ENCODE measurements at regions of chr18 and their contacts with region 1.

Region 1: DNA sequence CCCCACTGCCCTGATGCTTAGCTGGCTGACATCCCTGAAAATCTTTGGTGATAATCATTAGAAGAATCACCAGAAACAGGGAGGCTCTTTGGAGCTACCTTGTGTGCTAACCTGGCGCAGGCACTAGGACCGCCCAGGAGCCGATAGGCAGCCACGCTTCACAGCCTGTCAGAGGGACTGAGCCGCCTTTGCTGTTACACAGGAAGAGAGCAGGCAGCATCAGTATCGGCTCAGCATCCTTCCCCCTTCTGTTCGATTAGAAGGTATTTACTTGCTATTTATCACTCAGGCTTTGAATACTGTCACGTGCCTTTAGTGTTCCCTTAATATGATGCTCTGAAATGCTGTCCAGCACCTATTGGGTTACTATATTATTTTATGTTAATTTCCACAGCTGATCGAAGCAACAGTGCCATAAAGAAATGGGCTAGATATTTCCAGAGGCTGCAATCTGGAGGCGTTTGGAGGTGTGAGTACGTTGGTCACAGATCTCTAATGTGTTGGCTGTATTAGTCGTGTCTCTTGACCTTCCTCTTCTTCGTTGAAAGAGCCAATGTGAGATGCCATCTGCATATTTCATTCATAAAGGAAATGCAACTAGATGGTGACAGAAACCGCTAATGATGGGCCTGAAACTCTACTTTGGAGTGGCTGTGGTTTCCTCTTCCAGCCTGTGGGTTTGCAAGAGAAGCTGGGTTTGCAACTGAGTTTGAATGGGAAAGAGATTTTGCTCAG is 110.4 kb upstream of the RAB27B start:
- DNase-seq: peak; percentile 74
- ATAC-seq: peak; percentile 91
- H3K4me3 Mint-ChIP-seq: peak overlapping the region; percentile 53
- H3K27ac Mint-ChIP-seq: peak overlapping the region; percentile 44
- H3K4me1 Mint-ChIP-seq: peaks cover 39% of the 10 kb centered on the region
- H3K27me3 Mint-ChIP-seq: peaks cover 6% of the 10 kb centered on the region

Region 2: GRCh38 chr18:54269893-54270844 is 447.7 kb before region 1 on chr18:
- CTCF ChIA-PET with region 1: no interaction called
- POLR2A ChIA-PET with region 1: no interaction called
- intact Hi-C with region 1: loop called in 1 of 2 experiments (anchors 10 kb)
- DNase-seq: peak; percentile 75
- ATAC-seq: peak; percentile 63
- H3K4me3 Mint-ChIP-seq: peak overlapping the region; percentile 78
- H3K27ac Mint-ChIP-seq: peak overlapping the region; percentile 99
- H3K4me1 Mint-ChIP-seq: peaks cover 28% of the 10 kb centered on the region
- H3K27me3 Mint-ChIP-seq: no peaks in the 10 kb centered on the region

Region 3: GRCh38 chr18:54737986-54738385 is 20.1 kb after region 1 on chr18:
- CTCF ChIA-PET with region 1: interaction called, 5 read pairs
- POLR2A ChIA-PET with region 1: interaction called, 3 read pairs
- intact Hi-C with region 1: loop called in 1 of 2 experiments (anchors 2 kb)
- DNase-seq: no peak
- ATAC-seq: peak; percentile 60
- H3K4me3 Mint-ChIP-seq: no peak overlapping the region
- H3K27ac Mint-ChIP-seq: no peak overlapping the region
- H3K4me1 Mint-ChIP-seq: peaks cover 17% of the 10 kb centered on the region
- H3K27me3 Mint-ChIP-seq: no peaks in the 10 kb centered on the region

Region 4: GRCh38 chr18:54828281-54828881 is 110.5 kb after region 1 on chr18 and contains the start of gene RAB27B:
- CTCF ChIA-PET with region 1: no interaction called
- POLR2A ChIA-PET with region 1: no interaction called
- intact Hi-C with region 1: no loop called
- DNase-seq: peak; percentile 89
- ATAC-seq: peak; percentile 99
- H3K4me3 Mint-ChIP-seq: peak within 1 kb of the TSS; percentile 78
- H3K27ac Mint-ChIP-seq: peak within 1 kb of the TSS; percentile 55
- H3K4me1 Mint-ChIP-seq: peaks cover 20% of the 10 kb centered on the region
- H3K27me3 Mint-ChIP-seq: no peaks in the 10 kb centered on the region
- total RNA-seq, gene RAB27B: 0.35 to 0.53 TPM

Measured in activated CD4-positive, alpha-beta T cell treated with anti-CD3 and anti-CD28 coated beads for 36 hours (primary cell).